ENCODE measurements at regions of chr20 and their contacts with region 1.

Region 1: DNA sequence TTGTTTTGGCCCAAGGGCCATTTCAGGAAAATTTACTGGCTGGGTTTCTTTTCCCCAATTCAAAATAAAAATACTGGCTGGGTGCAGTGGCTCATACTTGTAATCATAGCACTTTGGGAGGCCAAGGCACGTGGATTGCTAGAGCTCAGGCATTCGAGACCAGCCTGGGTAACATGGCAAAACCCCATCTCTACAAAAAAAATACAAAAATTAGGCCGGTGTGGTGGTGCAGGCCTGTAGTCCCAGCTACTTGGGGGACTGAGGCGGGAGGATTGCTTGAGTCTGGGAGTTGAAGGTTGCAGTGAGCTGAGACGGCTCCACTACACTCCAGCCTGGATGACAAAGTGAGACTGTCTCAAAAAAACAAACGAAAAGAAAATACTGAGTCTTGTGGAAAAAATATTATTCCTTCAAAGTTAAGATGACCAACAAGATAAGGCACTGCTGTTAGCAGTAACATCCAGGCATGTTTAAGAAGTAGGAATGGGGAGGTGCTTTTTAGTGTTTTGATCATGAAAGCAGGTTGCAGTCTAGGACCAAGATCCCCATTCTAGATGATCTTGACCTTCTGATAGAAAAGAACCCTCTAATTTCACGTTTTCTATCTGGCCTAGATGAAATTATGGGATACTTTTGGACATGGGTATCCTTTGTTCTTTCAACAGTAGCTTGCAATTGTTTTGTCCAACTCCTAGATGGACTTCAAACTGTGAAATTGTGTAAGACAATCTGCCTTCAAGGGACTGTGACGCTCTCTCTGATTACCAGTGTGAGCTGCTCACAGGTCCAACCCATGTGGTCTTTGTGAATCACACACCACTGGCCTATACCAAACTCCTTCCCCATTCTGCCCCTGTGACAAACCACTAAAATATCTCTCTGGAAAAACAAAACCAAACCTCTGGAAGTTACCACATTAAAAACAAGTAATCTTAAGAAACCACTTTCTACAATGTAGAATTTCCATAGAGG is 59.8 kb downstream of the NINL start:
- DNase-seq: no peak
- ATAC-seq: no peak
- H3K4me3 Mint-ChIP-seq: no peak overlapping the region
- H3K27ac Mint-ChIP-seq: no peak overlapping the region
- H3K4me1 Mint-ChIP-seq: no peaks in the 10 kb centered on the region
- H3K27me3 Mint-ChIP-seq: no peaks in the 10 kb centered on the region
- CTCF ChIP-seq: no peak

Region 2: GRCh38 chr20:25407311-25408169 is 118.0 kb before region 1 on chr20 and contains the start of gene GINS1:
- CTCF ChIA-PET with region 1: no interaction called
- POLR2A ChIA-PET with region 1: no interaction called
- intact Hi-C with region 1: no loop called
- DNase-seq: peak; percentile 89
- ATAC-seq: peak; percentile 94
- H3K4me3 Mint-ChIP-seq: peak within 1 kb of the TSS; percentile 82
- H3K27ac Mint-ChIP-seq: peak within 1 kb of the TSS; percentile 75
- H3K4me1 Mint-ChIP-seq: peaks cover 14% of the 10 kb centered on the region
- H3K27me3 Mint-ChIP-seq: no peaks in the 10 kb centered on the region
- CTCF ChIP-seq: no peak
- total RNA-seq, gene GINS1: 34.9 to 35.9 TPM

Region 3: DNA sequence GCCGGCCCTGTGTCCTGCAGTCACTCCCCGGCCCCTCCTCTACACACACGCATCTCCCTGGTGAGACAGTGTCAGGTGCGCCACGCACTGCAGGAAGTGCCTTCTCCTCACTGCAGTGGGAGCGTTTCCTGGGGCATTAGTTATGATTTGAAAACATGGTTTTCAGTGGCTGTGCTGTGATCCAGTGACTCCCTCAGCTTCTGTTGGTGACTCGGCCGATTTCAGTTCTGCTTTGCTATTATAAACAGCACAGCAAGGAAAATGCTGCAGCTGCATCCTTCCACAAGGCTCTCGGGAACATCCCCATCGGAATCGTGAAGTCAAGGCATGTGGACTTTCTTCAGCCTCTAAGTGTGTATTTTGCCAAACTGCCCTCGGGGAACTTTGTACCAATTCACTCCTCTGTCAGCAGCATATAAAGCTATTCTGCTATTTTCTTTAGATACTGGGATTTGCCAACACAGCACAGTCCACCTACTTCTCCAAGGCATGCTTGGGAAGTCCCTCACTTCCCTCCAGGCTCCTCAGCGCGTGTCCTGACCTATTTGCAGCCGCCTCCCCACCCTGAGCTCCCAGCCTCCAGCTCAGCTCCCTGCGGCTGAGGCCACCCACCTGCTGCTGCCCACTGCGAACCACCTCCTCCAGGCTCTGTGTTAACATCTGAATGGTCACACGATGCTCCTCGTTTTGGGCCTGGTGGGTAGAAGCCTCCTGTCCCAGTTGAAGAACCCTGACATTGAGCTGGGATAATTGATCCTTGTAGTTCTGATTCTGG is 63.6 kb before region 1 on chr20:
- CTCF ChIA-PET with region 1: no interaction called
- POLR2A ChIA-PET with region 1: no interaction called
- intact Hi-C with region 1: loop called (anchors 10 kb)
- DNase-seq: no peak
- ATAC-seq: no peak
- H3K4me3 Mint-ChIP-seq: no peak overlapping the region
- H3K27ac Mint-ChIP-seq: no peak overlapping the region
- H3K4me1 Mint-ChIP-seq: no peaks in the 10 kb centered on the region
- H3K27me3 Mint-ChIP-seq: no peaks in the 10 kb centered on the region
- CTCF ChIP-seq: no peak

Region 4: DNA sequence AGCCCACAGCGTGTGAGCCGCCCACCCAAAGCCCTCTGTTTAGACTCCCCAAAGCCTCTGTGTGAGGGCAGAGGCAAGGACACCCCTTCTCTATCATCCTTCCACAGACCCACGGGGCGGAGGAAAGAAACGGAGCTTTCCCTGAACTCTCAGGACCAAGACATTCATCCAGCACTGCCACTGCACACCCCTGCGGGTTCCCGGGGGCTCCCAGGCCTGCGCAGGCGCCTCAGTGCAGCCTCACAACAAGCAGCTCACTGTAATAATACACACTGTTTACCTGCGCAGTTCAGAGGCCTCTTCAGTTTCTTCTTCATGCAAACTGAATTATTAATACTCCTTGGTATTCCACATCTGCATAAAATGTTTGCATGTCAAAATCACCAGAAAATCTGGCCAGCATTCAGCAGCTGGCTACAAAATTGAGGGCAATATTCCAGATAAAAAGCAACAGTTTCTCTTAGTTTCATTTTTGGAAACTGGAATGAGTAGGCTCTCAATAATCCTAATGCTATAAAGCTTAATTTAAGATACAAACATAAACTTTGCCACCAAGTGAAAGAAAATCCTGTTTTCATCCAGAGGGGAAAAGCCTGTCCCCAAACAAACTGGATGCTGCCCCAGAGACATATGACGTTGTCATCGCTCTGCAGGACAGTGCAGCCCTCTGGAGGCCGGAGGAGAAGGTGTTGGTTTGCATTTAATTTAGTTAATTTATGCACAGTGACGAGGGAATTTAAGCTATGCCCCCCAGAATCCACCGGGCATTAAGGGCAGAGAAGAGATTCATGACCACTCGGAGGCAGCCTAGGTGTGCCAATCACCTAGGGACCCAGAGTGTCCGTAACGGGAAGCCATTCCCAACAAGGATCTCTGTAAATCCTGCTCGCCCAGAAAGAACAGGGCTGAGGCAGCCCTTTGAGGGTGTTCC is 14.4 kb after region 1 on chr20:
- CTCF ChIA-PET with region 1: no interaction called
- POLR2A ChIA-PET with region 1: no interaction called
- intact Hi-C with region 1: no loop called
- DNase-seq: no peak
- ATAC-seq: no peak
- H3K4me3 Mint-ChIP-seq: no peak overlapping the region
- H3K27ac Mint-ChIP-seq: no peak overlapping the region
- H3K4me1 Mint-ChIP-seq: no peaks in the 10 kb centered on the region
- H3K27me3 Mint-ChIP-seq: no peaks in the 10 kb centered on the region
- CTCF ChIP-seq: no peak

Region 5: GRCh38 chr20:25865380-25866118 is 340.0 kb after region 1 on chr20:
- CTCF ChIA-PET with region 1: no interaction called
- POLR2A ChIA-PET with region 1: no interaction called
- intact Hi-C with region 1: no loop called
- DNase-seq: peak; percentile 75
- ATAC-seq: peak; percentile 52
- H3K4me3 Mint-ChIP-seq: peak overlapping the region; percentile 56
- H3K27ac Mint-ChIP-seq: no peak overlapping the region
- H3K4me1 Mint-ChIP-seq: peaks cover 28% of the 10 kb centered on the region
- H3K27me3 Mint-ChIP-seq: peaks cover 65% of the 10 kb centered on the region
- CTCF ChIP-seq: no peak

Measured in activated CD8-positive, alpha-beta T cell treated with anti-CD3 and anti-CD28 coated beads for 36 hours (primary cell).